ENCODE measurements at regions of chr19 and their contacts with region 1.

Region 1: DNA sequence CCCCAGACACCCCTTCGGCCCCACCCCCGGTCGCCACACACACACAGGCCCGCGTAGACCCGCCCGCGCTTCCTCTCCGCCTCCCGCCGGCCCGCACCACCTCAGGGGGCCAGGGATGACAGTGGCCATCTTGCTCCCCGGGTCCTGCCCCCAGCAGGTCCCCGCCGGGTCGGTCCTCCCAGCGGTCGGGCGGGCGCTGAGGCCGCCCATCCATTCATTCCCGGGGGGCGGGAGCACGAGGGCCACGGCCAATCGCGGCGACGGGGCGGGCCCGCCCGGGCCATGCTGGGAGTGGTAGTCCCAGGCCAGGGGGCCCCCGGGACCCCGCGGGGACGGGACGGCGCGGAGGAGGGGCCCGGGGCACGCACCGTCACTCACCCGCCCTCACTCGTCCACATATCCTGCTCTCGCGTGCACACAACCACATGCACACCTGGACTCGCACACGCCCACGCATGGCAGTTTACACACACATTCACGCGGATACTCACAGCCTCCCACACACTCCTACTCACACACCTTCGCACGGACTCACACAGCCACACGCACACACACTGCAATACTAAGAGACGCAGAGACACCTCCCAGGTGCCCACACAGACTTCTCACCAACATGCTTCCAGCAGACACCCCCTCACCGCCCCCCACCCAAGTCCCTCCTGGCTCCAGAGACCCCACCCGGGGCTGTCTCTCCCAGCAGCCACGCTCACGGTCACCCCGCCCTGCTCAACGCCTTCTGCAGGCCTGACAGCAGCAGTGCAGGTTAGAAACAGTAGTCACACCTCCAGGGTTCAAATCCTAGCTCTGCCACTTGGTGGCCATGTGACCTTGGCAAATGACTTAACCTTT is at the start of gene DPF1:
- DNase-seq: peak; percentile 66
- ATAC-seq: peak; percentile 84
- H3K4me3 Mint-ChIP-seq: peak within 1 kb of the TSS; percentile 55
- H3K27ac Mint-ChIP-seq: no peak within 1 kb of the TSS
- H3K4me1 Mint-ChIP-seq: peaks cover 14% of the 10 kb centered on the region
- H3K27me3 Mint-ChIP-seq: peaks cover 62% of the 10 kb centered on the region
- total RNA-seq, gene DPF1: 0.47 TPM in 1 of 2 experiments, not detected in the other

Region 2: GRCh38 chr19:38142176-38143035 is 81.8 kb before region 1 on chr19:
- CTCF ChIA-PET with region 1: interaction called, 12 read pairs
- DNase-seq: peak; percentile 68
- ATAC-seq: peak; percentile 71
- H3K4me3 Mint-ChIP-seq: no peak overlapping the region
- H3K27ac Mint-ChIP-seq: no peak overlapping the region
- H3K4me1 Mint-ChIP-seq: peaks cover 3% of the 10 kb centered on the region
- H3K27me3 Mint-ChIP-seq: no peaks in the 10 kb centered on the region

Region 3: GRCh38 chr19:38329651-38330050 is 105.4 kb after region 1 on chr19:
- CTCF ChIA-PET with region 1: no interaction called
- DNase-seq: no peak
- ATAC-seq: no peak
- H3K4me3 Mint-ChIP-seq: no peak overlapping the region
- H3K27ac Mint-ChIP-seq: no peak overlapping the region
- H3K4me1 Mint-ChIP-seq: no peaks in the 10 kb centered on the region
- H3K27me3 Mint-ChIP-seq: no peaks in the 10 kb centered on the region